ENCODE measurements at regions of chr10 and their contacts with region 1.

Region 1: DNA sequence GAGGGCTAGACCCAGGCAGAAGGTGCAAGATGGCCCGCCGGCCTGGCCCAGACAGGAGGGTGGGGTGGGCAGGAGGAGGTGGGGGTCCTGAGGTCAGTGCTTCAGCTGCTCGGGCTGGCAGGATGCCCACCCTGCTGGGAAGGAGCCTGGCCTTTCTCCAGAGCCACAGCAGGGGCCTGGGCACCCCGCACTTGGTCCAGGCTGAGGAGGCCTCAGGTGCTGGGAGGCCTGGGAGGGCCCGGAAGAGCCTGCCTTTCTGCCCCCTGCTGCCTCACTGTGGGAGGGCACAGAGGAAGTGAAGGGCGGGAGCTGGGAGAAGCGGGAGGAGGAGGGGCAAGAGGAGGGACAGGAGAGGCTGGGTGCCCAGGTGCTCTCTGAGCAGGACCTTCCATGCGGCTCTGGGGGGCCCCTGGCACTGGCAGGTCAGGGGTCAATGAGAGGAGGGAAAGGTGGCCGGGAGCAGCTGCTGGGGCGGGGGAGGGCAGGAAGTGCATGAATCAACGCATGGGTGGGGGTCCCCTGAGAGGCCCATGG is 49.7 kb downstream of the PWWP2B start:
- DNase-seq: peak; percentile 67 to 75 (median 69)
- H3K4me3 ChIP-seq: peak overlapping the region in 1 of 2 donors; percentile 51
- H3K4me3 Mint-ChIP-seq: peak overlapping the region; percentile 58 to 87 (median 72)
- H3K27ac ChIP-seq: peak overlapping the region; percentile 84
- H3K27ac Mint-ChIP-seq: peak overlapping the region; percentile 87 to 100 (median 98)
- H3K4me1 ChIP-seq: peaks cover 57% of the 10 kb centered on the region
- H3K4me1 Mint-ChIP-seq: peaks cover 18 to 60% (median 33%) of the 10 kb centered on the region in 4 donors
- H3K27me3 ChIP-seq: no peaks in the 10 kb centered on the region
- H3K27me3 Mint-ChIP-seq: no peaks in the 10 kb centered on the region

Region 2: DNA sequence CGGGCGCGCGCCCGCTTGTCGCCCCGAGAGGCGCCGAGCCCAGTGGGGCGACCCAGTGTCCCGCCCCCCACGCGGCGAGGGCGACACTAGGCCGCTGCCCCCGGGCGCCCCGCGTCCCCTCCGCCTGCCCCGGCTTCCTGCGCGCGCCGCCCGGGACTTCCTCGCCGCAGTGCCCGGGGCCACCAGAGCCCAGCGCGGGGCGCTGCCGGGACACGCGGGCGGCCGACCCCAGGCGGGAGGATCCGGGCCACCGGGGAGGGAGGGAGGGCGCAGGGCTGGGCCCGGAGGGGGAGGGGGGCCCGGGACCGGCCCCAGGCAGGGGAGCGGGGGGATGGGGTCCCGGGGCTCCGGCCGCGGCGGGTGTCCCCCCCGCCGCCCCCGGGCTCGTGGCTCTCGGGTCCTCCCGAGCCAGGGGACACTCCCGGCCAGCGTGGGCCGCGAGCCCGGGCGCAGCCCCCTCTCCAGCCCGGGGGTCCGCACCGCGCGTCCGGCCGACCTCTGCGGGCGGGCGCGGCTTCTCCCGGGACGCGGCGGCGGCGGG is 50.2 kb before region 1 on chr10:
- CTCF ChIA-PET with region 1: interaction called, 7 read pairs
- POLR2A ChIA-PET with region 1: interaction called, 41 read pairs
- intact Hi-C with region 1: loop called (anchors 1 kb)
- DNase-seq: peak; percentile 63 to 80 (median 78)
- H3K4me3 ChIP-seq: no peak overlapping the region
- H3K4me3 Mint-ChIP-seq: no peak overlapping the region
- H3K27ac ChIP-seq: peak overlapping the region; percentile 62
- H3K27ac Mint-ChIP-seq: no peak overlapping the region
- H3K4me1 ChIP-seq: peaks cover 26% of the 10 kb centered on the region
- H3K4me1 Mint-ChIP-seq: peaks cover 9 to 27% (median 20%) of the 10 kb centered on the region in 4 donors
- H3K27me3 ChIP-seq: no peaks in the 10 kb centered on the region
- H3K27me3 Mint-ChIP-seq: no peaks in the 10 kb centered on the region

Region 3: DNA sequence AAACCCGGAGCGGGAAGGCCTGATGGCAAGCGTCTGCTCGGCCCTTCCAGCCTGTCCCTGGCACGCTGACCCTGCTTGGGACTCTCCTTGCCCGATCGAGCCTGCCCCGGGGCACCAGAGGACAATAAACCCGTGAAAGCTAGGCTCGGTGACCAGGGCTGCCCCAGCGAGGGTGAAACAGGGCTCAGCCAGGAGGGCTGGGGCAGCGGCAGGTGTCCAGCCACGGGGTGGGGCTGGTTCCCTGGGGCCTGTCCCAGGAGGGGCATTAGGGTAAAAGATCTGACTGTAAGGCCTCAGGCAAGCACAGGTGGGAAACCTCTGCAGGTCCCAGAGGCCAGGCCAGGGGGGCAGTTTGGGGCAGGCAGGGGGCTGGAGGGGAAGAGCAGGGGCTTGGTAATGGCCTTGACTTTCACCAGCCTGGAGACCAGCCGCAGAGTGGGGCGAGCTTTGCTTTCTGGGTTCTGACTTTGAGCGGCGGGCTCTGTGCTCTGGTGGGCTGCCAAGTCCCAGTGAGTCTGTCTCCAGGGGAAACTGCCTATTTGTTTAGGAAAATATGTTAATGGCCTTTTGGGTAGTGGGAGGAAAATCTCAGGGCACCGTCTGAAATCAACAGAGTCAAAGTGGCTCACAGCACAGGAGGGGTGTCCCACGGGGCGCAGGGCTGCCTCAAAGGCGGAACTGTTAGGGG is 22.6 kb after region 1 on chr10:
- CTCF ChIA-PET with region 1: no interaction called
- POLR2A ChIA-PET with region 1: no interaction called
- intact Hi-C with region 1: no loop called
- DNase-seq: no peak
- H3K4me3 ChIP-seq: no peak overlapping the region
- H3K4me3 Mint-ChIP-seq: no peak overlapping the region
- H3K27ac ChIP-seq: no peak overlapping the region
- H3K27ac Mint-ChIP-seq: no peak overlapping the region
- H3K4me1 ChIP-seq: no peaks in the 10 kb centered on the region
- H3K4me1 Mint-ChIP-seq: peaks cover 0 to 4% (median under 1%) of the 10 kb centered on the region in 4 donors
- H3K27me3 ChIP-seq: no peaks in the 10 kb centered on the region
- H3K27me3 Mint-ChIP-seq: peaks cover 5 to 11% of the 10 kb centered on the region in 2 donors